ENCODE measurements at regions of chr4 and their contacts with region 1.

Region 1: GRCh38 chr4:39365830-39366771 is at the start of gene RFC1:
- DNase-seq: peak; percentile 98
- H3K4me3 Mint-ChIP-seq: peak within 1 kb of the TSS; percentile 96
- H3K27ac Mint-ChIP-seq: peak within 1 kb of the TSS; percentile 94
- H3K4me1 Mint-ChIP-seq: peaks cover 25% of the 10 kb centered on the region
- H3K27me3 Mint-ChIP-seq: no peaks in the 10 kb centered on the region
- total RNA-seq, gene RFC1: 81.6 and 83.0 TPM in 2 replicates

Region 2: GRCh38 chr4:39308611-39309010 is 57.5 kb before region 1 on chr4:
- intact Hi-C with region 1: loop called (anchors 10 kb)
- DNase-seq: no peak
- H3K4me3 Mint-ChIP-seq: no peak overlapping the region
- H3K27ac Mint-ChIP-seq: no peak overlapping the region
- H3K4me1 Mint-ChIP-seq: peaks cover 10% of the 10 kb centered on the region
- H3K27me3 Mint-ChIP-seq: no peaks in the 10 kb centered on the region

Measured in activated CD4-positive, alpha-beta T cell treated with anti-CD3 and anti-CD28 coated beads, Interleukin-2, amount 10 ng/mL, durations not matched to agents 24 days and 14 days (primary cell).